Natural killer cell (primary cell): ENCODE measurements at regions of chr15 and their contacts with region 1.

Region 1: DNA sequence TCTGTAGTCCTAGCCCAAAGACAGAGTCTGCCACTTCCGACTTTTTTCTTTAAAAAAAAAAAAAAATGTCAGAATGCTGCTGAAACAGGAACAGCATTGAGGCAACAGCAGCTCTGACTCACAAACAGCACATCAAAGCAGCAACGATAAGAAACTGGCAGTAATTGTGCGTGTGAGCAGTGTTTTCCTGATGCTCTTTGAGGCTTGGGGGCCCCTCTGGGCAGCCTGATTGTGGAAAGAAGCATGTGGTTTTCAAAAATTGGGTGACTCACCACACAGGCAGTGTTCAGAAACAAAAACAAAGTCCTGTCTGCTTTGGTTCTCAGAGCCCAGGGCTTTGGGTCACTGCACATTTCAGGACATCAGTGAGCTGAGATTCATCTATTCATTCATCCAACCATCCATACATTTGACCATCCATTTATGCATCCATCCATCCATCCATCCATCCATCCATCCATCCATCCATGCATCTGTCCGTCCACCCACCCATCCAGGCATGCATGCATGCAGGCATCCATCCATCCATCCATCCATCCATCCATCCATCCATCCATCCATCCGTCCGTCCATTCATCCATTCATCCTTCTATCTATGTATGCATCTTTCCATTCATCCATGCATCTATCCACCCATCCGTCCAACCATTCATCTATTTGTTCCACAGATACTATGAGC is 308.4 kb downstream of the RPLP1 start:
- DNase-seq: peak; percentile 61 to 93
- ATAC-seq: peak; percentile 58 to 78 (median 67)
- H3K4me3 ChIP-seq: no peak overlapping the region
- H3K4me3 Mint-ChIP-seq: peak overlapping the region; percentile 22
- H3K27ac ChIP-seq: peak overlapping the region; percentile 39
- H3K27ac Mint-ChIP-seq: peak overlapping the region; percentile 82 to 84
- H3K4me1 ChIP-seq: peaks cover 55% of the 10 kb centered on the region
- H3K4me1 Mint-ChIP-seq: peaks cover 53 to 66% of the 10 kb centered on the region in 2 donors
- H3K27me3 ChIP-seq: no peaks in the 10 kb centered on the region
- H3K27me3 Mint-ChIP-seq: peaks cover 50 to 74% of the 10 kb centered on the region in 2 donors
- CTCF ChIP-seq: no peak

Region 2: DNA sequence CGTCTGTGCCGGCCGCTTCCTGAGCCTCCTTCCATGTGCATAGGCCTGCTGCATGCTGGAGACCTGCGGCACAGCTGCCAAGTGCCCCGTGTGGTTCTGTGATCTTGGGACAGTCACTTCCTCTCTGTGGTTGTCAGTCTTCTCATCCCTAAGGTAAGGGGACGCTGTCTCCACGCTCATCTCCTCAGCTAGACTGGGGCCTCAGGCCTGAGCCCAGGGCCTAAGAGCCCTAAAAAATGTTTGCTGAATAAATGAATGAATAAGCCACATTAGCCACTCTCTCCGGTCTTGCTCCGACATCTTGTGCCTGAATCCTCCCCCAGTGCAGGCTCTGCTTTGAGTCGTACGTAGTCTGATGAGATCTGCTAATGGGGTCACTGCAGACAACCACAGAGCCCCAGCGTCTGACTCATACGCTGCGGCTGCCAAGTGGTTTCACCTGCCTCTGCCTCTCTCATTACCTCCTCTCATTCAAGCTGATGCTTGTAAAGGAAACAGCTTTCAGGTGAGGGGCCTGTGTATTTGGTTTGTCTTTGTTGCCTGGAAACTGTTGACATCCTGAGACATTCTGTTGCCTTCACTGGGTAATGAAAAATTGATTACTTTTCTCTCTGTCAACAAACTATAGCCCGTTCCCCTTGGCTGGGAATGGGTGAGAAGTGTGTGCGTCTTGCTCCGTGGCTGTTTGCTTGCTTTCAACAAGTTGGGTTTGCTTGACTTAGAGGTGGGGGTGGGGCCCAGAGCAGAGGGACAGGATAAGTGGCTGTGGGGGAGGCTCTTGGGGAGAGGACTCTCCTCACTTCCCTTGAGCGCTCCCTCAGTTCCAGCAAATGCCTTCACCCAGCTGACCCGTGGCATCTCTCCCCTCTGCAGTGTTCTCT is 292.5 kb before region 1 on chr15:
- intact Hi-C with region 1: loop called (anchors 1 kb)
- DNase-seq: peak; percentile 85 to 95
- ATAC-seq: peak; percentile 82 to 94 (median 92)
- H3K4me3 ChIP-seq: no peak overlapping the region
- H3K4me3 Mint-ChIP-seq: peak overlapping the region; percentile 88
- H3K27ac ChIP-seq: peak overlapping the region; percentile 81
- H3K27ac Mint-ChIP-seq: peak overlapping the region; percentile 89 to 98
- H3K4me1 ChIP-seq: peaks cover 32% of the 10 kb centered on the region
- H3K4me1 Mint-ChIP-seq: peaks cover 20 to 21% of the 10 kb centered on the region in 2 donors
- H3K27me3 ChIP-seq: peaks cover 2% of the 10 kb centered on the region
- H3K27me3 Mint-ChIP-seq: peaks cover 17 to 30% of the 10 kb centered on the region in 2 donors
- CTCF ChIP-seq: no peak

Region 3: GRCh38 chr15:69666411-69666882 is 94.6 kb before region 1 on chr15:
- intact Hi-C with region 1: loop called (anchors 1 kb)
- DNase-seq: peak in 1 of 2 donors; percentile 51
- ATAC-seq: peak in 1 of 3 donors; percentile 31
- H3K4me3 ChIP-seq: no peak overlapping the region
- H3K4me3 Mint-ChIP-seq: no peak overlapping the region
- H3K27ac ChIP-seq: peak overlapping the region; percentile 8
- H3K27ac Mint-ChIP-seq: peak overlapping the region in 1 of 2 donors; percentile 78
- H3K4me1 ChIP-seq: peaks cover 76% of the 10 kb centered on the region
- H3K4me1 Mint-ChIP-seq: peaks cover 57 to 63% of the 10 kb centered on the region in 2 donors
- H3K27me3 ChIP-seq: no peaks in the 10 kb centered on the region
- H3K27me3 Mint-ChIP-seq: peaks cover 15 to 28% of the 10 kb centered on the region in 2 donors
- CTCF ChIP-seq: no peak

Region 4: GRCh38 chr15:69713726-69714559 is 47.1 kb before region 1 on chr15:
- intact Hi-C with region 1: loop called (anchors 1 kb)
- DNase-seq: peak; percentile 65 to 91
- ATAC-seq: peak; percentile 84 to 91 (median 89)
- H3K4me3 ChIP-seq: no peak overlapping the region
- H3K4me3 Mint-ChIP-seq: peak overlapping the region; percentile 81
- H3K27ac ChIP-seq: peak overlapping the region; percentile 67
- H3K27ac Mint-ChIP-seq: peak overlapping the region; percentile 87 to 90
- H3K4me1 ChIP-seq: peaks cover 62% of the 10 kb centered on the region
- H3K4me1 Mint-ChIP-seq: peaks cover 65 to 72% of the 10 kb centered on the region in 2 donors
- H3K27me3 ChIP-seq: no peaks in the 10 kb centered on the region
- H3K27me3 Mint-ChIP-seq: no peaks in the 10 kb centered on the region
- CTCF ChIP-seq: no peak

Region 5: DNA sequence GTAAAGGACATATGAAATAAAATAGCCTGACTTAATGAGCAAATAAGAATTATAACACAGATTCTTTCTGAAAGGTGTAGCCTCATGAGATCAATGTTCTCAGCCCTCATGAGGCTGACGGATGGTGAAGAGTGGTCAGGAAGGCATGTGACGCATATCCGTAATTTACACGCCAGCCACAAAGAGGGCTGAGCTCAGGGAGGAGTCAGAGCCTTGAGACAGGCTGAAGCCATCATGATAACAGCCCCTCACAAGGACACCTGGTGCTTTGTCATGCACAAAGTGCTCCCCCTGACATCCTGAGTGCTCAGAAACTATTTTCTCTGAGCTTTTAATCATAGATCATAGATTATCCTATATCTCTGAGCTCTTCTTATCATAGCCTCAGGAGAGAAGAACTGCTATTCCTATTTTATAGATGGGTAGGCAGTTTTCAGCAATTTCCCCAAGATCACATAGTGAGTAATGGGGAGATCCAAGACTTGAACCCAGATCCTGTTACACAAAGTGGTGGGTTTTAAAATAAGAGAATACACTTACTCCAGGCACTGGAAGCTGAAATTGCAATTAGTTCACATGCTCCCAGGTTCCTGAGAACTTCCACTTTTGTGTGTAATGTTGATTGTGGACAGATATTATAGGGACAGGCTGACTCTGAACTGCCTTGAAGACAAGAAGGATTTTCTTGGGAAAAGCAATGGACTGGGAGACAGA is 41.3 kb before region 1 on chr15:
- intact Hi-C with region 1: loop called (anchors 1 kb)
- DNase-seq: peak; percentile 69 to 89
- ATAC-seq: peak; percentile 79 to 94 (median 92)
- H3K4me3 ChIP-seq: no peak overlapping the region
- H3K4me3 Mint-ChIP-seq: peak overlapping the region; percentile 59
- H3K27ac ChIP-seq: peak overlapping the region; percentile 90
- H3K27ac Mint-ChIP-seq: peak overlapping the region; percentile 74 to 85
- H3K4me1 ChIP-seq: peaks cover 82% of the 10 kb centered on the region
- H3K4me1 Mint-ChIP-seq: peaks cover 85 to 93% of the 10 kb centered on the region in 2 donors
- H3K27me3 ChIP-seq: no peaks in the 10 kb centered on the region
- H3K27me3 Mint-ChIP-seq: peaks cover 6% of the 10 kb centered on the region in 2 donors
- CTCF ChIP-seq: no peak

Region 6: DNA sequence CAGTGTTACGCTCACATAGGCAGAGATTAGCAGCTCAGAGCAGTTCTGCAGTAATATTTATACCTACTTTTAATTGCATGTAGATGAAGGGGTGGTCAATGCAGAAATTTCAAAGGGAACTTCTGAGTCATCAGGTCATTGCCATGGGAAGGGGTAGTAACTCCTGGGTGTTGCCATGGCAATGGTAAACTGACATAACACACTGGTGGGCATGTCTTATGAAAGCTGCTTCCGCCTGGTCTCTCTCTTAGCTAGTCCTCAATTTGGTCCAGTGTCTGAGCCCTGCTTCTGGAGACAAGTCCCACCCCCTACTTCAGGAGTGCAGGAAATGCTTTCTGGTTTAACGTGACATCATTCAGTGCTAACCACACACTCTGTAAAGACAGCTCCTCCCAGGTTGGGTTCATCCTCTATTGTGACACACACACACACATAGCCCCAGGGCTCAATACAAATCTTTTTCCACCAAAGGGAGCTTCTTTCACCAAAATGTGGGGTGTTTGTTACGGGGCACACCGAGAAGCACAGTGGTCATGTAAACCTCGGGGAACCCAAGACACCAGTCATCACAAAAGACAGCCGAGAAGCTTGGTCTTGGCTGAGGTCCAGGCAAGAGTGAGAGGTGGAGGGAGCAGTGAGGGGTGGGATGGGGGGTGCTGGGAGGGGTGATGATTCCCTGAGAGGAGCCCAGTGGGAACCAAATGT is 262.2 kb after region 1 on chr15:
- intact Hi-C with region 1: loop called (anchors 2 kb)
- DNase-seq: peak; percentile 47 to 89
- ATAC-seq: peak; percentile 95 to 99 (median 95)
- H3K4me3 ChIP-seq: no peak overlapping the region
- H3K4me3 Mint-ChIP-seq: peak overlapping the region; percentile 42
- H3K27ac ChIP-seq: peak overlapping the region; percentile 32
- H3K27ac Mint-ChIP-seq: peak overlapping the region; percentile 37 to 86
- H3K4me1 ChIP-seq: peaks cover 20% of the 10 kb centered on the region
- H3K4me1 Mint-ChIP-seq: peaks cover 22 to 30% of the 10 kb centered on the region in 2 donors
- H3K27me3 ChIP-seq: no peaks in the 10 kb centered on the region
- H3K27me3 Mint-ChIP-seq: peaks cover 21 to 50% of the 10 kb centered on the region in 2 donors
- CTCF ChIP-seq: no peak

Region 7: GRCh38 chr15:70299931-70300869 is 539.2 kb after region 1 on chr15:
- intact Hi-C with region 1: loop called (anchors 1 kb)
- DNase-seq: peak; percentile 80 to 87
- ATAC-seq: peak; percentile 91 to 96 (median 94)
- H3K4me3 ChIP-seq: no peak overlapping the region
- H3K4me3 Mint-ChIP-seq: peak overlapping the region; percentile 55
- H3K27ac ChIP-seq: no peak overlapping the region
- H3K27ac Mint-ChIP-seq: peak overlapping the region; percentile 60 to 67
- H3K4me1 ChIP-seq: peaks cover 24% of the 10 kb centered on the region
- H3K4me1 Mint-ChIP-seq: peaks cover 9 to 11% of the 10 kb centered on the region in 2 donors
- H3K27me3 ChIP-seq: peaks cover 66% of the 10 kb centered on the region
- H3K27me3 Mint-ChIP-seq: peaks cover 32% of the 10 kb centered on the region in 2 donors
- CTCF ChIP-seq: no peak